ENCODE measurements at regions of chr1 and their contacts with region 1.

Region 1: DNA sequence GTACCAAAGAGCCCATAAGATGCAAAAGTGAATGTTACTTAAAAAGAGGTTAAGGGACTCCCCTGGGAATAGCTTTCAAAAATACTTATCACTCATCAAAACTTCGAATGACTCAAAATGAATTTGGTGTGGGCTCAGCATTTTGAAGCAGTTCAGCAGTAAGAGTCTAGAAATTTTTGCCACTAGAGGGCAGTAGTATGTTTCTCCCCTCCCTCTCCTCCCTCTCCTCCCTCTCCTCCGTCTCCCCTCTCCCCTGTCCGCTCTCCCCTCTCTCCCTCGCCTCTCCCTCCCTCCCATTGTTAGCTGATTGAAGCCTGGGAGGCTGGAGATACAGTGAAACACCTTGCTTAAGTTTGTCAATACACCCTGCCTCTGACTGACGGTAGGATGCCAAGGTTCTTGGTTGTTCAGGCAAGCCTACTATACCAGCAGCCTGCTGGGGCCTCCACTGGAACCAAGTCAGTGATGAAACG is 70.8 kb upstream of the TENT5C start:
- DNase-seq: peak in 4 of 6 donors; percentile 61 to 77 (median 68)
- ATAC-seq: peak; percentile 79 to 95 (median 92)
- H3K4me3 ChIP-seq: no peak overlapping the region
- H3K27ac ChIP-seq: peak overlapping the region in 1 of 4 donors; percentile 20
- H3K4me1 ChIP-seq: peaks cover 0 to 7% (median 0%) of the 10 kb centered on the region in 3 donors
- H3K27me3 ChIP-seq: no peaks in the 10 kb centered on the region
- CTCF ChIP-seq: peak; percentile 44 to 60 (median 48)

Region 2: DNA sequence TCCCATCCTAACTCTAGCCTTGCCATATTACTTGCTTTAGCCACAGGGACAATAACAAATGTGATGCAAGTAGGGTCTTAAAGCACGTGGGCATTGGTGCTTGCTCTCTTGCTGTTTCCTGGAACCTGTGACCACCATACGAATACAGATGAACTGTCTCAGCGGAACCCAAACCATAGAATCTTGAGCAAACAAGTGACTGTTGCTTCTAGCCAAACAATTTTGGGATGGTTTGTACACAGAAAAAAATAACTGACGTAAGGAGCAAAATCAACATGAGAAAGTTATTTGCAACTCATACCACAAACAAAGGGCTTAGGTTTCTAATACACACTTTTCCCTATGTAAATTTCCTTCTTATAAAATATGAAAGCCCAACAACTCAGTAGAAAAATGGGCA is 309.1 kb before region 1 on chr1:
- intact Hi-C with region 1: no loop called
- DNase-seq: no peak
- ATAC-seq: no peak
- H3K4me3 ChIP-seq: no peak overlapping the region
- H3K27ac ChIP-seq: no peak overlapping the region
- H3K4me1 ChIP-seq: no peaks in the 10 kb centered on the region
- H3K27me3 ChIP-seq: no peaks in the 10 kb centered on the region
- CTCF ChIP-seq: no peak

Region 3: GRCh38 chr1:117347907-117348306 is 187.1 kb before region 1 on chr1:
- intact Hi-C with region 1: no loop called
- DNase-seq: no peak
- ATAC-seq: no peak
- H3K4me3 ChIP-seq: no peak overlapping the region
- H3K27ac ChIP-seq: no peak overlapping the region
- H3K4me1 ChIP-seq: no peaks in the 10 kb centered on the region
- H3K27me3 ChIP-seq: no peaks in the 10 kb centered on the region
- CTCF ChIP-seq: no peak

Region 4: GRCh38 chr1:117466761-117467160 is 68.3 kb before region 1 on chr1:
- intact Hi-C with region 1: no loop called
- DNase-seq: no peak
- ATAC-seq: no peak
- H3K4me3 ChIP-seq: no peak overlapping the region
- H3K27ac ChIP-seq: no peak overlapping the region
- H3K4me1 ChIP-seq: no peaks in the 10 kb centered on the region
- H3K27me3 ChIP-seq: no peaks in the 10 kb centered on the region
- CTCF ChIP-seq: no peak

Region 5: GRCh38 chr1:117599286-117600221 is 64.5 kb after region 1 on chr1:
- intact Hi-C with region 1: loop called in 1 of 3 experiments (anchors 10 kb)
- DNase-seq: peak in 1 of 6 donors; percentile 11
- ATAC-seq: peak; percentile 50 to 84 (median 72)
- H3K4me3 ChIP-seq: no peak overlapping the region
- H3K27ac ChIP-seq: no peak overlapping the region
- H3K4me1 ChIP-seq: no peaks in the 10 kb centered on the region
- H3K27me3 ChIP-seq: no peaks in the 10 kb centered on the region
- CTCF ChIP-seq: no peak

Region 6: GRCh38 chr1:117674521-117675397 is 139.7 kb after region 1 on chr1:
- intact Hi-C with region 1: loop called in 1 of 3 experiments (anchors 10 kb)
- DNase-seq: peak in 2 of 6 donors; percentile 43 to 63
- ATAC-seq: peak; percentile 35 to 74 (median 58)
- H3K4me3 ChIP-seq: no peak overlapping the region
- H3K27ac ChIP-seq: peak overlapping the region in 2 of 4 donors; percentile 12 to 67
- H3K4me1 ChIP-seq: peaks cover 13 to 31% (median 23%) of the 10 kb centered on the region in 3 donors
- H3K27me3 ChIP-seq: no peaks in the 10 kb centered on the region
- CTCF ChIP-seq: no peak

Region 7: DNA sequence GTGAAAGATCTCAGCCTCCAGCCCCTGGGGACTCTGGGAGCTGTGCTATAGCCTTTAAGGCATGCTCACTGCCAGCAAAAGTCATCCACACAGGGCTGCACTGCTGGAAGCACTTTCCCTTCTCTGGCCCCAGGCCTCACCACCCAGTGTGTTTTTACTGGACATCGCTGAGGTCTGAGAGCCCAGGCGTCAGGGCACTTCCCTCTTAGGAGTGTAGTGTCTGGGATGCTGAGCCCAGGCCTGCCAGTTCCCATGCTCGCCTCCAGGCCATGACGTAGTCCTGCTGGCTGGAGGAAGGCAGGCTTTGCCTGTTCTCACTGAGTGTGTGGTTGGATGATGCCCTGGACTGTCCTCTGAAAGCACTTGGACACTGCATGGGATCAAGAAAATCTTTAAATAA is 293.2 kb after region 1 on chr1:
- intact Hi-C with region 1: no loop called
- DNase-seq: peak in 2 of 6 donors; percentile 53 to 57
- ATAC-seq: peak; percentile 22 to 61 (median 34)
- H3K4me3 ChIP-seq: no peak overlapping the region
- H3K27ac ChIP-seq: no peak overlapping the region
- H3K4me1 ChIP-seq: peaks cover 16 to 21% (median 20%) of the 10 kb centered on the region in 3 donors
- H3K27me3 ChIP-seq: no peaks in the 10 kb centered on the region
- CTCF ChIP-seq: no peak

Region 8: DNA sequence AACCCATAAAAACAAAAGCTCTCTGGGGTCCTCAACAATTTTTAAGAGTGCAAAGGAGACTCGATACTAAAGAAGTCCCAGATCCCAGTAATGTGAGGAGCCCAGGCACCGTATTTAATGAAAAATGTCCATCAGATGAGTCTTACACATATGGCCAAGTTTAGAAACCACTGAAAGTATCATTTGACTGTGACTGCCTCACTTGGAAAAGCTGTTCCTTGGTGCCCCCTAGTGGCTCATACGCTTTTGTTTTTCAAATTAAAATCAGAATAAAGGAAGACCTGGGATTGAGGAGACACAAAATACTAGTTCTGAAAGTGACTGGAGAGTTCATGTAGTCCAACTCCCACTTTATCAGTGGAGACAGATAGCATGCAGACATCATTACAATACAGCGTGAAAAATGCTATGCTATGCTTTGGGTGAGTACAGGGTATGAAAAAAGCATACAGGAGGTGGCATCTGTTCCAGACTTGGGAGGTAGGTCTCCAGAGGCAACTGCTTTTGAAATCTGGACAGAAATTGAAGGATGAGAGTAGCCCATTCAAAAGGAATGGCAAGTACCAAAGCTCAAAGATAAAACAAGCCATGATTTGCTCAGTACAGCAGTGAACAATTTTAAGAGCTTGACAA is 360.6 kb after region 1 on chr1:
- intact Hi-C with region 1: loop called in 1 of 3 experiments (anchors 10 kb)
- DNase-seq: peak in 5 of 6 donors; percentile 48 to 77 (median 58)
- ATAC-seq: peak; percentile 60 to 81 (median 77)
- H3K4me3 ChIP-seq: no peak overlapping the region
- H3K27ac ChIP-seq: peak overlapping the region in 1 of 4 donors; percentile 8
- H3K4me1 ChIP-seq: peaks cover 33 to 50% (median 41%) of the 10 kb centered on the region in 3 donors
- H3K27me3 ChIP-seq: no peaks in the 10 kb centered on the region
- CTCF ChIP-seq: peak in 3 of 4 donors; percentile 50 to 74 (median 72)

Measured in pancreas (tissue), 10 donors.